AG04449 (cell line): ENCODE measurements at regions of chr5 and their contacts with region 1.

Region 1: DNA sequence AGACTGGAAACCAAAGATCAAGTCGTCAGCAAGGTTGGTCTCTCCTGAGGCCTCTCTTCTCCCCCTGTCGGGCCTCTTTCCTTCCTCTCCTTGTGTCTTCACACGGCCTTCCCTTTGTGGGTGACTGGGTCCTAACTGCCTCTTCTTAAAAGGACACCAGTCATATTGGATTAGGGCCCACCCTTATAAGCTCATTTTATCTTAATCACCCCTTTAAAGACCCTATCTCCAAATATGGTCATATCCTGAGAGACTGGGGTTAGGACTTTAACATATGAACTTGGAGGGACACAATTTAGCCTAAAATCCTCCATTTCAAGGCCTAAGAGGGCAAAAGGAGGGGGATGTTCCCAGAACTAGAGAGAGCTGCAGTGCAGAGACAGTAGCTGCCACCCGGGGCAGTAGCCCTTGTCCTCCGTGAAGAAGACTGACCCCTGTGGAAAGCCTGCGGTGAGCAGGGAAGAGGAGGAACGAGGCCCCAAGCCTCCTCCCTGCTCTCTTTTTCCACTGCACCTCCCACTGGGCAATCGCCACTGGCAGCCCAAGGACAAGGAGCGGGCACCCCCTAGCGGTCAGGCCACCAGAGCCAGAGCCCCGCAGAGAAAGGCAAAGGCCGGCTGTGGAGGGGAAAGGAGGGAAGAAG is 34.9 kb downstream of the CFAP90 start:
- DNase-seq: no peak
- H3K4me3 ChIP-seq: no peak overlapping the region
- CTCF ChIP-seq: peak; percentile 90

Region 2: DNA sequence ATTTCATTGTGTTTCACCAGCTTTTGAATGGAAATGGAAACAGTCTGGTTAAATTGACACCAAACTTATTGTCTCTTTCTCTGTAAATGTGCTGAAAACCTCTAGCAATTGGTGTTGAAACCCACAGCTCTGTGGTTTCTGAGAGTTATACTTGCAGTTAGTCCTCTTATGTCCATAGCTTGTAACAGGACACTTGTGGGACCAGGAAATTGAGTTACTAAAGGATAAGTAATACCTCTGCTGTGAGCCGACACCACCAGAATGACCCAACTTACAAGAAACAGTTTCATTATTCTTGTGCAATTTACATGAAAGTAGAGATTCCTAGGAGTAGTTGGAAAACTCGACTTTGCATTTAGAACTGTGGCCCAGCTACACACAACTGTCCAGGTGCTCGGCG is 156.6 kb before region 1 on chr5:
- CTCF ChIA-PET with region 1: no interaction called
- POLR2A ChIA-PET with region 1: no interaction called
- DNase-seq: no peak
- H3K4me3 ChIP-seq: no peak overlapping the region
- CTCF ChIP-seq: no peak

Region 3: GRCh38 chr5:7805379-7805778 is 10.6 kb before region 1 on chr5:
- CTCF ChIA-PET with region 1: interaction called, 11 read pairs
- POLR2A ChIA-PET with region 1: no interaction called
- DNase-seq: no peak
- H3K4me3 ChIP-seq: no peak overlapping the region
- CTCF ChIP-seq: peak; percentile 12